ENCODE measurements at regions of chr15 and their contacts with region 1.

Region 1: DNA sequence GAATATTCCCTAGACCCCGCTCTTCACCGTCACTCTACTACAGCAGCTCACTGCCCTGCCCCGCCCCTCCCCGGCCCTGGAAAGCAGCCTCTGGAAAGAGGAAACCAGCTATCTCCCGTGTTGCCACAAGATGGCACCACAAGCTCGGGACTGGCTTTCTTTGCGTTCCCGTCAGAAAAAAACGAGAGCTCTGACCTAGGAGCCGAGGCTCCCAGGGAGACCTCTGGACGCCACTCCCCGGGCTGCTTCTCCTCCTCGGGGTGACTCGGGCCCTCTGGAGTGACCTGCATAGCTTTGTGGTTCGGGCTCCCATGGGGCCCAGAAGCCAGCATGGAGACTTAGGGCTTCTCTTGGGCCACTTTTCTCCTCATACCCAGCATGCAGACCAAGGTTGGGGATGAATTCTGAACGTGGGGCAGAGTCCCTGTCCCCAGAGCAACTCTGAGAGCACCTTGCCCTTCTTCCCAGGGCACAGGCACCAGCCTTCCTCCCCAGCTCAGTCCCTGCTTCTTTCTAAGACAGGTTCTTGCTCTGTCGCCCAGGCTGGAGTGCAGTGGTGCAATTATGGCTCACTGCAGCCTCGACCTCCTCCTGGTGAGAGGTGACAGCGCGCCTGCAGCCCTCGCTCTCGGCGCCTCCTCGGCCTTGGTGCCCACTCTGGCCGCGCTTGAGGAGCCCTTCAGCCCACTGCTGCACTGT is 19.0 kb downstream of the STOML1 start:
- DNase-seq: peak; percentile 77
- H3K4me3 ChIP-seq: no peak overlapping the region
- H3K27ac ChIP-seq: no peak overlapping the region
- H3K4me1 ChIP-seq: no peaks in the 10 kb centered on the region
- H3K27me3 ChIP-seq: no peaks in the 10 kb centered on the region
- CTCF ChIP-seq: peak; percentile 83 to 94

Region 2: GRCh38 chr15:73950831-73951561 is 22.1 kb before region 1 on chr15:
- CTCF ChIA-PET with region 1: interaction called, 11 read pairs
- dilution Hi-C with region 1: no loop called
- in situ Hi-C with region 1: no loop called
- intact Hi-C with region 1: no loop called
- DNase-seq: peak; percentile 78
- H3K4me3 ChIP-seq: no peak overlapping the region
- H3K27ac ChIP-seq: peak overlapping the region; percentile 11
- H3K4me1 ChIP-seq: peaks cover 14% of the 10 kb centered on the region
- H3K27me3 ChIP-seq: no peaks in the 10 kb centered on the region
- CTCF ChIP-seq: peak; percentile 65 to 82

Region 3: DNA sequence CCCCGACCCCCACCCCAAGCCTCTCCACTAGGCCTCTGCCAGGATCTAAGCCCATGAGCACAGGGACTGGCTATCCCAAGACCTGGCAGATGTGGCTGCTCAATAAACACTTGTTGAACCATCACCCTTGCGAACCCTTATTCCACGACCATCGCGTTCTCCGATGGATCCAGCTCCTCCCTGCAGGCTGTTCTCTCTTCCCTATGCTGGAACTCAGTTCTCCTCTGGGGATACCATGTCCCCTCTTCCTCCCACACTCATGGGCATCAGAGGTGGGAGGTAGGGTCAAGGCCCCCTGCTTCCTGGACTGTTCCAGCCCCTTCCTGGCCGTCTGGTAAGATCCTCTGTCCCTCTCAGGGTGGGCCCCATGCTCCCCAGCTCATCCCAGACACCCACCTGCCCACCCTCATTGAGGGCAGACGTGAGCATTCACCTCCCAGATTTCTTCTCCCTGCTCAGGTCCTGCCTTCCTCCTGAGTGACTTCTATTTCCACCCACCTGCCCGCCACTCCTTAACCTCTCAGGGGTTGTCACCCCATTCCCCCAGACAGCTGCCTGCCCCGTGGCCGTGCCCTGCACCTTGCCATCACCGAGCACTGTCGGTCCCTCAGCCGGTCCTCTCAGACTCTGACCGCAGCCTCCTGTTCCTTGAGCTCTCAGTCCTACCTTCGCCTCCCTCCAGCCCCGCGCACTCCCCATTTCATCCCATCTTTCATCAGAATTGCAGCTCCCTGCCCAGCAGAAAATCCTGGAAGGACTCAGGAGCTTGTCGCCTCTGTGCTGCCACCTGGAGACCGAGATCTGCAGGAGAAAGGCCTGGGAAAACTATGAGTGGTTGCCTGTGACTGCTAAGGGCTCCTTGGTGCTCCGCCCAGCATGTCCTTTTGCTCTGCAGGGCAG is 63.4 kb after region 1 on chr15:
- CTCF ChIA-PET with region 1: interaction called, 28 read pairs
- dilution Hi-C with region 1: no loop called
- in situ Hi-C with region 1: no loop called
- intact Hi-C with region 1: loop called (anchors 1 kb)
- DNase-seq: peak; percentile 20
- H3K4me3 ChIP-seq: no peak overlapping the region
- H3K27ac ChIP-seq: no peak overlapping the region
- H3K4me1 ChIP-seq: peaks cover 3% of the 10 kb centered on the region
- H3K27me3 ChIP-seq: no peaks in the 10 kb centered on the region
- CTCF ChIP-seq: peak; percentile 33 to 57

Region 4: DNA sequence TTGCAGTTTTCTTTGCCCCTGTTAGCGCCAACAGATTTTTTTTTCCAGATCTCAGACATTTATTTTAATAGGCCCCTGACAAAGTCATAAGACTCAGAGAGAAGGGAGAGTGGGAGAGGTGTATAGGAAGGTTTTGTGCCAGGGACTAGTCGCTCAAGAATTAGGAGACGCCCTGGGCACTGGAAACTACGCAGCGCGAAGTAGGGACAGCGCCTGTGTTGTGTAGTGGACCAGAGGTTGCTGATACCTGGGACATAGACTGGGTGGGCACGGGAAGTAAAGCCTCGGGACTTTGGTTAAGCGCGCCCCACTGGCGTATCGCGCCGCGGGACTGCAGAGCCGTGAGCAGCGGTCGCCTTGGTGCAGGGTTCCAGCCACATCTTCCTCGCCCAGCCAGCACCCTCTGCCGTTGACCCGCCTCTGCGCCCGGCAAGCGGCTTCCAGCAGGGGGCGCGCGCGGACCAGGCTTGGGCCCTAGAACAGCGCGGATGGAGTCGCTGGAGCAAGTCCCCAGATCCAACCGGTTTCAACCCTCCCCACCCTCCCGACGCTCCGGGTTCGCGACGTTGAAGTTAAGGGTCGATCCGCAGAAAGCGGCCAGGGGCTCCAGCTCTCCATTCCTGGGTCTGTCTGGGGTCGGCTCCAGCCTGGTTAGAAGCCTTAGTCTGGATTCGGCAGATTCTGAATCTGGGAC is 154.3 kb after region 1 on chr15:
- CTCF ChIA-PET with region 1: interaction called, 3 read pairs
- dilution Hi-C with region 1: no loop called
- in situ Hi-C with region 1: no loop called
- intact Hi-C with region 1: loop called (anchors 1 kb)
- DNase-seq: peak; percentile 76
- H3K4me3 ChIP-seq: peak overlapping the region in 1 of 3 experiments; percentile 41
- H3K27ac ChIP-seq: no peak overlapping the region
- H3K4me1 ChIP-seq: peaks cover 13% of the 10 kb centered on the region
- H3K27me3 ChIP-seq: peaks cover 41% of the 10 kb centered on the region
- CTCF ChIP-seq: peak; percentile 80 to 99

Region 5: DNA sequence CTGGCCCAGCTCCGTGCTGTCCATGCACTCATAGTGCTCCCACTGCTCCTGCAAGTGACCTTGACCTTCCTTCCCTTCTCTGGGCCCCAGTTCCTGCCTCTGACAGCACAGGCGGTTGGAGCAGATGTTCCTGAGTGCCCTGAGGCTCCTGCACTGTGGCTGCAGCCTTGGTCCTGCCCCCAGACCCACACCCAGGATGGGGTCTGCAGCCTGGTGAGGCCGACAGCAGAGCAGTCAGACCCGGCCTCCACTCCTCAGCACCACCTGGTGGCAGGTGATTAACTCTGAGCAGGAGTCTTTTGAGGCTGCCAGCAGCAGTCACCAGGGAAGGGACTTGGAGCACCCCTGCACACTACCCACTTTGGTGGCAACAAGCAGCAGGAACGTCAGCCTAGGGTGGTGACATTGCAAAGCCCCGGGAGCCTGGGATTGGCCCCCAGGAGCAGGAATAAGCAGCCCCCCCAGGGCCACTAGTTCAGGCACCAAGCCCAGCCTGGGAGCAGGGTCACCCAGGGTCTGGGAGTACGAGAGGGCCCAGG is 329.8 kb after region 1 on chr15:
- CTCF ChIA-PET with region 1: interaction called, 13 read pairs
- dilution Hi-C with region 1: loop called (anchors 25 kb)
- in situ Hi-C with region 1: no loop called
- intact Hi-C with region 1: loop called (anchors 1 kb)
- DNase-seq: peak; percentile 15
- H3K4me3 ChIP-seq: no peak overlapping the region
- H3K27ac ChIP-seq: no peak overlapping the region
- H3K4me1 ChIP-seq: peaks cover 12% of the 10 kb centered on the region
- H3K27me3 ChIP-seq: no peaks in the 10 kb centered on the region
- CTCF ChIP-seq: peak; percentile 50 to 84

Region 6: GRCh38 chr15:74322181-74323076 is 349.3 kb after region 1 on chr15:
- CTCF ChIA-PET with region 1: interaction called, 13 read pairs
- dilution Hi-C with region 1: loop called (anchors 25 kb)
- in situ Hi-C with region 1: loop called in 1 of 2 experiments (anchors 10 kb)
- intact Hi-C with region 1: loop called (anchors 1 kb)
- DNase-seq: peak; percentile 32
- H3K4me3 ChIP-seq: no peak overlapping the region
- H3K27ac ChIP-seq: no peak overlapping the region
- H3K4me1 ChIP-seq: no peaks in the 10 kb centered on the region
- H3K27me3 ChIP-seq: no peaks in the 10 kb centered on the region
- CTCF ChIP-seq: peak; percentile 87 to 97

Measured in mammary epithelial cell (primary cell).